Vagina (tissue), 2 donors: ENCODE measurements at regions of chr22 and their contacts with region 1.

Region 1: GRCh38 chr22:32528984-32529982 is 54.7 kb downstream of the FBXO7 start:
- DNase-seq: no peak
- H3K4me3 ChIP-seq: peak overlapping the region in 1 of 2 donors; percentile 25
- H3K27ac ChIP-seq: peak overlapping the region; percentile 64
- H3K4me1 ChIP-seq: peaks cover 55% of the 10 kb centered on the region
- H3K27me3 ChIP-seq: no peaks in the 10 kb centered on the region
- CTCF ChIP-seq: peak; percentile 94 to 98 (median 97)
- POLR2A ChIP-seq: no peak

Region 2: DNA sequence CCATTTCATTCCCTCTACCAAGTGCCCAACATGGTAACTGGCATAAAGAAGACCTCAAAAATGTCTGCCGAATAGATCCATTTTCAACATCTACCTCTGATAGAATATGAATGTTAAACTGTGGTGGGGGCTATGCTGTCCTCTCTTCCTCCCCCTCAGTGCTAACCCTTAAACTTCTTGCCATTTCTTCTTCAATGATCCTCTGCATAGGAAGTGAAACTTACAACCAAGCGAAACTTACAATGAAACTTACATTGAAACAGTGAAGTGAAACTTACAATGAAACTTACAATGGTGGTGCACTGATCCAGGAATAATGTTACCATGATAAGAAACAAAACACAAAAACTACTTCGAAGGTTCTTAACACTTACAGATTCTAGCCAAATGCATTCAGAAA is 122.0 kb before region 1 on chr22:
- intact Hi-C with region 1: no loop called
- DNase-seq: no peak
- H3K4me3 ChIP-seq: no peak overlapping the region
- H3K27ac ChIP-seq: no peak overlapping the region
- H3K4me1 ChIP-seq: peaks cover 26% of the 10 kb centered on the region
- H3K27me3 ChIP-seq: no peaks in the 10 kb centered on the region
- CTCF ChIP-seq: no peak
- POLR2A ChIP-seq: no peak

Region 3: DNA sequence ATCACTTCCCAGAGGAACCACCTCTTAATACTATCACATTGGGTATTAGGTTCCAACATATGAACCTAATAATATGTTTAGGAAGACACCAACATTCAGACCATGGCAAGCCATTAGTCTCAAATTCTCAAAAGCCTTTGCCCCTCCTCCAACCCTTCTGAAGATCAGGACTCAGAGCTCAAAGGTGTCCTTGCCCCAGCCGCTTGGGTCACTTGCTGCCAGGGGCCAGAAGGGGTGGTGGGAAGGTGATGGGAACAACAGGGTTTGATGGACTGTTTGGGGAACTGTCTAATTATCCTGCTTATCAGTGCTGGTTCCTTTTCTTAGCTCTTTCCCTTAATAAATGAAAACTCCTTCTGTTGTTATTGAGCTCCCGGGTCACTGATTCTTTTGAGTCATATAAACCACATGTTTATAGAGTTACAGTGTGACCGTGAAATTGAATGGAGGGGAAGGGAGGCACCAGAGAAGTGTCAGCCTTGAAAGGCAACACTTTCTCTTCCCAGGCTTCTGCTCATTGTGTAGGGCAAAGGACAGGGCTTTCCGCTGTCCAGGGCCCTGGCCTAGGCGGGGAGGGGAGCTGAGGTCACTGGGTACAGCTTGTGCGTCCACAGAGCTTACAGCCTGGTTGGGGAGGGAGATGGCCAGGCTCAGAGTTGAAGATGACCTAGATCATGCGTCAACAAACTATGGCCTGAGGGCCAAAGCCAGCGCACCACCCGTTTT is 50.4 kb after region 1 on chr22:
- intact Hi-C with region 1: loop called (anchors 10 kb)
- DNase-seq: no peak
- H3K4me3 ChIP-seq: no peak overlapping the region
- H3K27ac ChIP-seq: peak overlapping the region; percentile 48
- H3K4me1 ChIP-seq: peaks cover 36% of the 10 kb centered on the region
- H3K27me3 ChIP-seq: no peaks in the 10 kb centered on the region
- CTCF ChIP-seq: no peak
- POLR2A ChIP-seq: no peak

Region 4: DNA sequence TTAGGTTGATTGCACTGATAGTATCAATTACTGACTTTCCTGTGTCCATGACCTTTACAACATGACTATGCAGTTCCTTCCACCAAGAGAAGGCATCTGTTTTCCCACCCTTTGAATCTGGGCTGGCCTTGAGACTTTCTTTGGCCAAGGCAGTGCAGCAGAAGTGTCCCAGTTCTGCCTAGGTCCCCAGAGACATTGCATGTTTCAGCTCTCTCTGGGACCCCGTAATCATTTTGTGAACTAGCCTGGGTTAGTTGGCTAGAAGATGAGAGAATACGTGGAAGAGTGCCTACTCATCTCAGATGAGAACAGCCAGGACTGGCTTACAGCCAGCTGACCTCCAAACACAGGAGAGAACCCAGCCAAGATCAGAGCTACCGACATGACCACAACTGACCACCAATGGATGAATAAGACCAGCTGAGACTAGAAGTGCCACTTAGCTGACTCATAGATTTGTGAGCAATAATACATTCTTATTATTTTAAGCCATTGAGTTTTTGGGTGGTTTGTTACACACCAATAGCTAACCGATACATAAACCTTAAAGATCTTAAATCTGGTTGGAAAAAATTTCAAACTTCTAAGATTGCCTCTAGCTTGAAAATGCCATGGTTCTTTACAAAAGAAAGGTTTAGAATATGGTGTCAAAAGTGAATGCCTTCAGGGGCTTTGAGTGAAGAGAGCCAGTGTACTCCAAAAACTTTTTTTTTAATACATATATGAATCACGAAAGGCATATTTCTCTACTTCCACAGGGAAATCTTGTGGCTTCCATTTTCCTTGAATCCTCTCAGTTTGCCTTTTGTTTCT is 90.5 kb after region 1 on chr22:
- intact Hi-C with region 1: loop called (anchors 5 kb)
- DNase-seq: no peak
- H3K4me3 ChIP-seq: no peak overlapping the region
- H3K27ac ChIP-seq: peak overlapping the region; percentile 93
- H3K4me1 ChIP-seq: peaks cover 81% of the 10 kb centered on the region
- H3K27me3 ChIP-seq: no peaks in the 10 kb centered on the region
- CTCF ChIP-seq: no peak
- POLR2A ChIP-seq: no peak

Region 5: GRCh38 chr22:32985899-32986765 is 456.8 kb after region 1 on chr22:
- intact Hi-C with region 1: loop called (anchors 5 kb)
- DNase-seq: no peak
- H3K4me3 ChIP-seq: no peak overlapping the region
- H3K27ac ChIP-seq: no peak overlapping the region
- H3K4me1 ChIP-seq: peaks cover 19% of the 10 kb centered on the region
- H3K27me3 ChIP-seq: no peaks in the 10 kb centered on the region
- CTCF ChIP-seq: peak; percentile 70 to 86 (median 79)
- POLR2A ChIP-seq: no peak